A673 (cell line): ENCODE measurements at regions of chr18 and their contacts with region 1.

Region 1: DNA sequence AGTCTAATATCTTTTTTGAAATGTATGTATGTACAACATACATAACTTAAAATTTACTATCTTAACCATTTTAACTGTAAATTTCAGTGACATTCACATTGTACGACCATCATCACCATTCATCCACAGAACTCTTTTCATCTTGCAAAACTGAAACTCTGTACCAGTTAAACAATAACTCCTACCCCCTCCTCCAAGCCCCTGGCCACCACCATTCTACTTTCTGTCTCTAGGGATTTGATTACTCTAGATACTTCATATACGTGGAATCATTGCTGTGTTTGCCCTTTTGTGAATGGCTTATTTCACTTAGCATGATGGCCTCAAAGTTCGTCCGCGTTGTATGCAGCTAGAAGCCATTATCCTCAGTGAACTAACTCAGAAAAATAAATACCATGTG is 217.0 kb downstream of the METTL4 start:
- DNase-seq: no peak
- H3K4me3 ChIP-seq: no peak overlapping the region
- H3K27ac ChIP-seq: no peak overlapping the region
- H3K4me1 ChIP-seq: no peaks in the 10 kb centered on the region
- H3K27me3 ChIP-seq: peaks cover 21% of the 10 kb centered on the region
- CTCF ChIP-seq: no peak

Region 2: GRCh38 chr18:2258954-2259353 is 95.3 kb before region 1 on chr18:
- CTCF ChIA-PET with region 1: no interaction called
- POLR2A ChIA-PET with region 1: no interaction called
- intact Hi-C with region 1: no loop called
- DNase-seq: no peak
- H3K4me3 ChIP-seq: no peak overlapping the region
- H3K27ac ChIP-seq: no peak overlapping the region
- H3K4me1 ChIP-seq: no peaks in the 10 kb centered on the region
- H3K27me3 ChIP-seq: no peaks in the 10 kb centered on the region
- CTCF ChIP-seq: no peak

Region 3: DNA sequence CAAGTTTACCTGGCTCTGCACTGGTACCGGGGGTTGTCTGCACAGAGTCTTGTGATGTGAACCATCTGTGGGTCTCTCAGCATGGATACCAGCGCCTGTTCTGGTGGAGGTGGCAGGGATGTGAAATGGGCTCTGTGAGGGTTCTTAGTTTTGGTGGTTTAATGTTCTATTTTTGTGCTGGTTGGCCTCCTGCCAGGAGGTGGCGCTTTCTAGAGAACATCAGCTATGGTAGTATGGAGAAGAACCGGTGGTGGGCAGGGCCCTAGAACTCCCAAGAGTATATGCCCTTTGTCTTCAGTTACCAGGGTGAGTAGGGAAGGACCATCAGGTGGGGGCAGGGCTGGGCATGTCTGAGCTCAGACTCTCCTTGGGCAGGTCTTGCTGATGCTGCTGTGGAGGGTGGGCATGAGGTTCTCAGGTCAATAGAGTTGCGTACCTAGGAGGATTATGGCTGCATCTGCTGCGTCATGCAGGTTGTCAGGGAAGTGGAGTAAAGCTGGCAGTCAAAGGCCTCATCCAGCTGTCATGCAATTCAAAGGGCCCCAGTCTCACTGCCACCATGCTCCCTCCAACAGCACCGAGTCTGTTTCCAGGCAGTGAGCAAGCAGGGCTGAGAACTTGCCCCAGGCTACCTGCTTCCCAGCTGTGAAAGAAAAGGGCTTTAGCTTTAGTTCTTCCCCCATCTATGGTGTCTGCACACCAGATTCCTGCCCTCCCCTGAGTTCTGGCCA is 61.0 kb before region 1 on chr18:
- CTCF ChIA-PET with region 1: no interaction called
- POLR2A ChIA-PET with region 1: no interaction called
- intact Hi-C with region 1: loop called (anchors 10 kb)
- DNase-seq: peak; percentile 16
- H3K4me3 ChIP-seq: no peak overlapping the region
- H3K27ac ChIP-seq: no peak overlapping the region
- H3K4me1 ChIP-seq: no peaks in the 10 kb centered on the region
- H3K27me3 ChIP-seq: no peaks in the 10 kb centered on the region
- CTCF ChIP-seq: 0 out of 2 replicates have a peak, but pooled peaks have one; percentile 12

Region 4: GRCh38 chr18:2706903-2707302 is 352.6 kb after region 1 on chr18:
- CTCF ChIA-PET with region 1: no interaction called
- POLR2A ChIA-PET with region 1: no interaction called
- intact Hi-C with region 1: no loop called
- DNase-seq: peak; percentile 4
- H3K4me3 ChIP-seq: no peak overlapping the region
- H3K27ac ChIP-seq: peak overlapping the region; percentile 61
- H3K4me1 ChIP-seq: peaks cover 11% of the 10 kb centered on the region
- H3K27me3 ChIP-seq: no peaks in the 10 kb centered on the region
- CTCF ChIP-seq: no peak